ENCODE measurements at regions of chr2 and their contacts with region 1.

Region 1: GRCh38 chr2:118250001-118250400 is 161.7 kb downstream of the INSIG2 start:
- DNase-seq: peak; percentile 80
- ATAC-seq: peak; percentile 51
- H3K4me3 ChIP-seq: no peak overlapping the region
- H3K27ac ChIP-seq: peak overlapping the region; percentile 89
- H3K4me1 ChIP-seq: peaks cover 41% of the 10 kb centered on the region
- H3K27me3 ChIP-seq: no peaks in the 10 kb centered on the region
- CTCF ChIP-seq: no peak

Region 2: GRCh38 chr2:118207889-118208288 is 42.1 kb before region 1 on chr2:
- CTCF ChIA-PET with region 1: interaction called, 13 read pairs
- POLR2A ChIA-PET with region 1: no interaction called
- intact Hi-C with region 1: no loop called
- DNase-seq: no peak
- ATAC-seq: no peak
- H3K4me3 ChIP-seq: no peak overlapping the region
- H3K27ac ChIP-seq: no peak overlapping the region
- H3K4me1 ChIP-seq: peaks cover 16% of the 10 kb centered on the region
- H3K27me3 ChIP-seq: no peaks in the 10 kb centered on the region
- CTCF ChIP-seq: no peak